ENCODE measurements at regions of chr16 and their contacts with region 1.

Region 1: GRCh38 chr16:30902029-30902972 is 5.9 kb downstream of the CTF1 start:
- DNase-seq: peak; percentile 61
- ATAC-seq: peak; percentile 87
- H3K4me3 Mint-ChIP-seq: peak overlapping the region; percentile 90
- H3K27ac Mint-ChIP-seq: peak overlapping the region; percentile 96
- H3K4me1 Mint-ChIP-seq: peaks cover 9% of the 10 kb centered on the region
- H3K27me3 Mint-ChIP-seq: peaks cover 26% of the 10 kb centered on the region
- CTCF ChIP-seq: no peak

Region 2: DNA sequence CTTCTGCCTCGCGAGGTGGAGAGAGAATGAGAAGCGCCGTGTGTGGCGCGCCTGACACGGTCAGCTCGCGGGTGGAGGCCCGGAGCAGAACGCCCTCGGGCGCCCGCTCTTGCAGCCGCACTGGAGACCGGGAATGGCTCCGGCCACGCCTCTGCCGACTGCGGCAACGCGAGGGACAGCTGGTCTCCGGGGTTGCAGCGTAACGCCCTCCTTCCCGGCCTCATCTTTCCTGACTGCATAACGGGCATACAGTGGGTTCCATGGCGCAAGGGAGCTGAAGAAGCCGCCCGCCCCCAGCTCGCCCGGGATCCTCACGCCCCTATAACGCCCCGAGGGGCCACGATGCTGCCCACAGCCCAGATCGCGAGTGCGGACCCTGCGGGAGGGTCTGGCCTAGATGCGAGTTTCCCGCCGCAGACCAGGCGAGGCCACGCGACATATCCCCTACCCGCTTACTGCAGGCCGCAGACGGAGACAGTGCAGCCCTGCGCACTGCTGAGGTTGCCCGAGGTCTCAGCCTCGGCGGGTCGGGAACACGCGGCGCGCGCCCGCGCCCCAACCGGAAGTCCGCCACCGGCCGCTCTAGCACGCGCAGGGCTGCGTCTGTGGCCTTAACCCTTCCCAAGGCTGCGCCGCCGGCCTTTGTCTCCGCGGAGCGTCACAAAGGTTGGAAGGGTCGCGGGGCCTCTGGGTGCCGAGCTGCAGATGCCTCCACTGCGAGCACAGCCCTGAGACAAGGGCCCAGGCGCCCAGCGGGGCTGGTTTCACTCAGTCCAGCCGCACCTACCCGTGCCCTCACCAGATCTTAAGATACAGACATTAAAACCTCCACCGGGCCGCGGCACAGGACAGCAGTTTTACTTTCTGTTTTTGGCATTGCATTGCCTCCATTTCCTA is 27.2 kb before region 1 on chr16:
- CTCF ChIA-PET with region 1: interaction called, 10 read pairs
- POLR2A ChIA-PET with region 1: interaction called, 6 read pairs
- DNase-seq: peak; percentile 91
- ATAC-seq: peak; percentile 91
- H3K4me3 Mint-ChIP-seq: peak overlapping the region; percentile 96
- H3K27ac Mint-ChIP-seq: peak overlapping the region; percentile 97
- H3K4me1 Mint-ChIP-seq: peaks cover 12% of the 10 kb centered on the region
- H3K27me3 Mint-ChIP-seq: peaks cover 40% of the 10 kb centered on the region
- CTCF ChIP-seq: no peak

Region 3: DNA sequence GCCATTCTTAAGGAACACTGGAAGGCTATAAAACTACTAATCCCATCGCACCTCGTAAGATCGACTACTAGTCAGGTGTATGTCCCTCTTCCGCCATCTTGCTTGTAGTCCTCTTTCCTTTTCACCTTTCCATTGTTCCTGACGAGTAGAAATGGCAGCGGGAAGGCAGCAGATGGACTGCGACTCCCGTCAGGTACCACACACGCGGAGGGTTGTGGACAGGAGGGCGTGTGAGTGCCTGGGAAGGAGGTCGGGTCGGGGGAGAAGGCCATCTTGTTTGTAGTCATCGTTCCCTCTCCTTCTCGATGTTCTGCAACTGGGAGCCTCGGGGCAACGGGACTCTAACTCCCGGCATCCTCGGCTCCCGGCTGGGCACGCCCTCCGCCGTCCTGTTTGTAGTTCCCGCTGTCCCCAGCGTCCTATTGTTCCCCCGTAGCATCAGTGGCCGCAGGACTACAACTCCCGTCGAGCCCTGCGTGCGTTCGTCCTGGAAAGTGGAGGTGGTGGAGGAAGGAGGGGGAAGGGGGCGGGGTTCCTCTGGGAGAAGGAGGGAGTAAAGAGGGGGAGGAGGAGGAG is 20.7 kb after region 1 on chr16:
- CTCF ChIA-PET with region 1: interaction called, 12 read pairs
- POLR2A ChIA-PET with region 1: interaction called, 3 read pairs
- DNase-seq: peak; percentile 99
- ATAC-seq: peak; percentile 60
- H3K4me3 Mint-ChIP-seq: peak overlapping the region; percentile 99
- H3K27ac Mint-ChIP-seq: peak overlapping the region; percentile 100
- H3K4me1 Mint-ChIP-seq: peaks cover 20% of the 10 kb centered on the region
- H3K27me3 Mint-ChIP-seq: no peaks in the 10 kb centered on the region; the same call in 1 of the 2 replicates
- CTCF ChIP-seq: no peak

Region 4: GRCh38 chr16:30941600-30942425 is 39.5 kb after region 1 on chr16:
- CTCF ChIA-PET with region 1: interaction called, 14 read pairs
- POLR2A ChIA-PET with region 1: no interaction called
- DNase-seq: peak; percentile 82
- ATAC-seq: peak; percentile 97
- H3K4me3 Mint-ChIP-seq: no peak overlapping the region
- H3K27ac Mint-ChIP-seq: no peak overlapping the region
- H3K4me1 Mint-ChIP-seq: peaks cover 13% of the 10 kb centered on the region
- H3K27me3 Mint-ChIP-seq: no peaks in the 10 kb centered on the region
- CTCF ChIP-seq: peak; percentile 81

Measured in WTC11 (cell line).